Activated naive CD4-positive, alpha-beta T cell treated with anti-CD3 and anti-CD28 coated beads for 36 hours (primary cell): ENCODE measurements at regions of chr7 and their contacts with region 1.

Region 1: GRCh38 chr7:80047856-80048459 is 86.7 kb upstream of the GNAI1 start:
- DNase-seq: no peak
- H3K4me3 Mint-ChIP-seq: no peak overlapping the region
- H3K27ac Mint-ChIP-seq: no peak overlapping the region
- H3K4me1 Mint-ChIP-seq: no peaks in the 10 kb centered on the region
- H3K27me3 Mint-ChIP-seq: no peaks in the 10 kb centered on the region

Region 2: DNA sequence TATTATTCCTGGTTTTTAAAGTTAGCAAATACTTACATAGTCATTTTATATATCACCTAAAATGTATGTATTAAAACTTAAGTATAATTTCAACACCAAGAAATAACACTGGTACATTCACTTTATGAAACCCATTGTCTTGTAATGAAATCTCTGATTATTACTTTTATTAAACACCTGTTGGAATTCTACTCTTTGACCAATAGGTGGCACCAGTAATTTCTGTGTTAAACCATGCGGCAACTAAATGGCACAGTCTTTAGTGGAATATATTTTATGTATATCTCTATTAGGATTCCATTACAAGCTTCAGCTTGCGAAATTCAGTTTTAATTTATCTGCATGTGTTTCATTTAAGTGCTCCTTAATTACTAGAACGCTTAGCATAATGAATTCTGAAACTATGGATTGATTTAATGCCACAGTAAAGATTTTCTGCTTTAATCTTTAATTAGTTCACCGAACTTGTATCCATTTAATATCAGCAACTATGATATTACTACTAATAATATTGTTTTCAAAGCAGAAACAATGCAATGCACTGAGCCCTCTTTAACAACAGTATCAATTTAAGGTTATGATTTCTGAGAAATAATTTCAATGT is 775.8 kb before region 1 on chr7:
- CTCF ChIA-PET with region 1: no interaction called
- intact Hi-C with region 1: loop called (anchors 1 kb)
- DNase-seq: no peak
- H3K4me3 Mint-ChIP-seq: no peak overlapping the region
- H3K27ac Mint-ChIP-seq: no peak overlapping the region
- H3K4me1 Mint-ChIP-seq: no peaks in the 10 kb centered on the region
- H3K27me3 Mint-ChIP-seq: no peaks in the 10 kb centered on the region

Region 3: DNA sequence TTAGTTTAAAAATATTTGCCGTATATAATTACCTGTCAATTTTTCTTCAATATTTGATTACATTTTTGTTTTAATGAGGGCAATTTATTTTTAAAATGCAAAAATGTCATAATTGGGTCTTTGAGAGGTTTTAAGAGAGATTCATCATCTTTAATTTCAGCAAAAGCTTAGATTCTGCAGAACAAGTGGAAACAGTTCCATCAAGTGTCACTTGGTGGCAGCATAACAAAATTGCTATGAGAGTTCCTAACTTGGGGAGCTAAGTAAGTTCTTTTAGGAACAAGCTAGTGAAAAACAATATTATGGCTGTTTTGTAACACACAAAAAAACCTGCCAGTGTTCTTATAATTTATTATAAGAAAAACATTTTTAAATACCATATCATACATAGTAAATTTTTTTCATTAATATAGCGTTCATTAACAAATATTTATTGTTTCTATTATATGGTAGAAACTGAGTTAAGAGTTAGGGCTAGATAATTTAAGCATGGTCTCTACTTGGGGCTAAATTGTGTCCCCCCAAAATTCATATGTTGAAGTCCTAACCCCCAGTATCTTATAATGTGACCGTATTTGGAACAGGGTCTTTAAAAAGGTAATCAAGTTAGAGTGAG is 749.7 kb before region 1 on chr7:
- CTCF ChIA-PET with region 1: no interaction called
- intact Hi-C with region 1: loop called (anchors 1 kb)
- DNase-seq: peak; percentile 13
- H3K4me3 Mint-ChIP-seq: no peak overlapping the region
- H3K27ac Mint-ChIP-seq: no peak overlapping the region
- H3K4me1 Mint-ChIP-seq: no peaks in the 10 kb centered on the region
- H3K27me3 Mint-ChIP-seq: no peaks in the 10 kb centered on the region

Region 4: DNA sequence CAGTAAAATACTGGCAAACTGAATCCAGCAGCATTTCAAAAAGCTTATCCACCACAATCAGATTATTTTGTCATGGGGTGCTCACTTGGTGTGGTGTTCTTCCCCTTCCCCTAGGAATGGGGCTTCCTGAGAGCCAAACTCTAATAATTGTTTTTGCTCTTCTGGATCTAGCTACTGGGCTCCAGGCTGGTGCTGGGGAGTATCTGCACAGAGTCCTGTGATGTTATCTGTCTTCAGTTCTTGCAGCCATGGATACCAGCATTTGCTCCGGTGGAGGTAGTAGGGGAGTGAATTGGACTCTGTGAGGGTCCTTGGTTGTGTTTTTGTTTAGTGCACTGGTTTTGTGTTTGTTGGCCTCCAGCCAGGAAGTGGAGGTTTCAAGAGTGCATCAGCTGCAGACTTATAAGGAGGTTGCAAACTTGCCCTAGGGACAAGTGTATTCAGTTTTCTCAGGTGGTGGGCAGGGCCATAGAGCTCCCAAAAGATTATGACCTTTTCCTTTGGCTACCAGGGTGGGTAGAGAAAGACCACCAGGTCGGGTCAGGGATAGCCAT is 286.0 kb before region 1 on chr7:
- CTCF ChIA-PET with region 1: no interaction called
- intact Hi-C with region 1: no loop called
- DNase-seq: no peak
- H3K4me3 Mint-ChIP-seq: no peak overlapping the region
- H3K27ac Mint-ChIP-seq: no peak overlapping the region
- H3K4me1 Mint-ChIP-seq: no peaks in the 10 kb centered on the region
- H3K27me3 Mint-ChIP-seq: no peaks in the 10 kb centered on the region